PC-9 (cell line): ENCODE measurements at regions of chr1 and their contacts with region 1.

Region 1: GRCh38 chr1:200005165-200005564 is 22.3 kb upstream of the NR5A2 start:
- DNase-seq: no peak
- H3K4me3 ChIP-seq: no peak overlapping the region
- H3K27ac ChIP-seq: no peak overlapping the region
- H3K4me1 ChIP-seq: no peaks in the 10 kb centered on the region
- H3K27me3 ChIP-seq: no peaks in the 10 kb centered on the region
- CTCF ChIP-seq: no peak

Region 2: GRCh38 chr1:199706826-199707606 is 298.1 kb before region 1 on chr1:
- CTCF ChIA-PET with region 1: no interaction called
- POLR2A ChIA-PET with region 1: interaction called, 11 read pairs
- intact Hi-C with region 1: no loop called
- DNase-seq: no peak
- H3K4me3 ChIP-seq: no peak overlapping the region
- H3K27ac ChIP-seq: no peak overlapping the region
- H3K4me1 ChIP-seq: no peaks in the 10 kb centered on the region
- H3K27me3 ChIP-seq: no peaks in the 10 kb centered on the region
- CTCF ChIP-seq: no peak

Region 3: GRCh38 chr1:199832451-199832850 is 172.7 kb before region 1 on chr1:
- CTCF ChIA-PET with region 1: no interaction called
- POLR2A ChIA-PET with region 1: no interaction called
- intact Hi-C with region 1: no loop called
- DNase-seq: no peak
- H3K4me3 ChIP-seq: no peak overlapping the region
- H3K27ac ChIP-seq: no peak overlapping the region
- H3K4me1 ChIP-seq: no peaks in the 10 kb centered on the region
- H3K27me3 ChIP-seq: no peaks in the 10 kb centered on the region
- CTCF ChIP-seq: no peak